ENCODE measurements at regions of chr6 and their contacts with region 1.

Region 1: GRCh38 chr6:34027445-34027936 is 118.4 kb downstream of the GRM4 start:
- DNase-seq: no peak

Region 2: GRCh38 chr6:33812669-33813068 is 214.8 kb before region 1 on chr6:
- intact Hi-C with region 1: no loop called
- DNase-seq: no peak

Region 3: DNA sequence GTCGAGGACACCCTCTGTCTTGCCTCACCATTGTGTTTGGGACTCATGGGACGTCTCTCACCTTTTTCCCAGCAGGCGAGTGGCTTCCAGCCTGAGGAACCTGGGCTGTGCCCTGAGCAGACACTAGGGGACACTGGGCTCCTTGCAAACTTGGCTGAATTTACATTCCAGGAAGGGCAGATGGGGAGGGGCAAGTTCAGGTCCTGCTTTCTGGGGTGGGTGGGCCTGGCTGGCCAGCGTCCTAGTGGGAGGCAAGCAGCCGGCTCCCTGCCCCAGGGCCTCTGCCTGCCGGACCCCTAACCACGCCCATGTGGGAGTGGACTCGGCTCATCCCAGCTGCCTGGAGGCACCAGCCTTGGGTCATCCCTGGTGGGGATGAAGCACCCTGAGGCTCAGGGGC is 175.5 kb before region 1 on chr6:
- intact Hi-C with region 1: loop called (anchors 5 kb)
- DNase-seq: no peak

Measured in cardiac septum (tissue), 1 donor.